Mammary epithelial cell (primary cell): ENCODE measurements at regions of chr2 and their contacts with region 1.

Region 1: DNA sequence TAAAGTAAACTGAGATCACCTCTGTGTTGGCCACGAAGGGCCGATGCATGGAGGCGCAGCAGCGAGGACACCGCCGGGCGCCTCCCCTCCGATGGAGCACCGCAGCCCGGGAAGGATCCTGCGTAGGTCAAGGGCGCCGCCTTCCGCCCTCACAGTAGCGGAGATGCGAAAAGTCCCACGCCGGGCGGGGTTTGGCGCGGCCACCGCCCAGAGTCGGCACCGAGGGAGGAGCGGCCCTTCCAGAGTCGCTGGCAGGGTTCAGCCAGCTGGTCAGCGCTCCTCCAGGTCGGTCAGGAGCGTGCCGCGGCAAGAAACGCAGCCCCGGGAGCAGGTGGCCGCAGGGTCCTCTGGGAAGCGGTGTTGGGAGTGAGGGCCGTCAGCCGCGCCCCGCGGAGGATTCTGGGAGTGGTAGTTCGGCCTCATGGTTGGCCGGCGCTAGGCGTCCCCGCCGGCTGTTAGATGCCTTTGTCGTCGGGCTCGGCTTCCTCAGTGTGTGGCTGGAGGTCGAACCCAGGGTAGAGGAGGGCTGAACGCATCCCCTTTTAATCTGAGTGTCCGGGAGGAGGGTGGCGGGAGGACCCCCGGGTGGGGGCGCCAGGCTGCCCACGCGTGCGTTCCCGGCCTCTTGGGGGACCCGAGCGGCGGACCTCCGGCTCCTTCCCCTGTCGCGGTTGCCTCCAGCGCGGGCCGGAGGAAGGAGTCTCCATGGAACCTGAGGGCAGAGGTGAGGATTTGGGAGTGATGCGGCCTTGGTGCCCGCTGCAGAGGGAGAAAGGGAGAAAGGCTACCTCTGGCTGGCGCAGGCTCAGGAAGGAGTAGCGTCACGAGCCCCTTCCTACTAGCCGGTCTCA is at the start of gene ZNF892:
- DNase-seq: peak; percentile 96
- H3K4me3 ChIP-seq: peak within 1 kb of the TSS; percentile 56 to 73 (median 64)
- H3K27ac ChIP-seq: peak within 1 kb of the TSS; percentile 63
- H3K4me1 ChIP-seq: peaks cover 13% of the 10 kb centered on the region
- H3K27me3 ChIP-seq: no peaks in the 10 kb centered on the region
- CTCF ChIP-seq: peak; percentile 9 to 59
- total RNA-seq, gene ZNF892: 4.8 to 12.0 TPM

Region 2: DNA sequence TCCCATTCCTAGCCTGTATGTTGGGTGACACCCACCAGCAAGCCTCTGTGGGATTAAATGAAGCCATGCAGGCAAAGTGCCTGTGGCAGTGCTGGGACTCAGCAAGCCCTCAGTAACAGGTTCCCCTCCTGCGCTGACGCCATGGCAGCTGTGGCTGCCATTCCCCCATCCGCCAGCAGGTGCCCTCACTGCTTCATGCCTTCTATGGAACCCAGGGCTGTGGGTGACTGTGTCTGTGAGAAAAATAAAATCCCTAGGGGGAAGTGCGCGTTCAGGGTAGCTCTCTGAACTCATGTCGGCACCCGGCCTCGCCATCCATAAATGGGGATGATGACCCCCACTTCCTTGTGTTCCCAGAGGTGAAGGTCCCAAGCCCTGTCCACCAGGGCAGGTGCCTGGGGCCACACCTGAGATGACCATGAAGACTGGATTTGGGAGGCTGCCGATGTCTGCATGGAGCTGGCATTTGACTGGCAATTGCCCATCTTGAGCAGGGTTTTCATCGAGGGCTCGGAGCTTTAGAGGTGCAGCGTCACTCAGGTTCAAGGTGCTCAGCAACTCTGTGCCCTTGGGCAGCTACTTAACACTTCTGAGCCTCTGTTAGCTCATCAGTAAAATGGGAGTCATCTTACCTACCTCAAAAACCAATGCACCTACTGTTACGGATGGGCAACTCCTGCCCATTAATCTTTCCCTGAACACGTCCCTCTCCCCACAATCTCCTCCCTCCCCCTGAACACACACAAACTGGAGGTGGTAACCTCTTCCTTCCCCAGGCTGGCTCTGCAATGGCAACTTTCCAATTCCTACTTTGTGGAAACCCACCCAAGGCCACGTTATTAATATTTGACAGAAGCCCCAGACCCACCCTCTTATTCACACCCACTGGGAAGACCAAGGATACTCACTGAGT is 184.8 kb before region 1 on chr2:
- CTCF ChIA-PET with region 1: no interaction called
- dilution Hi-C with region 1: no loop called
- in situ Hi-C with region 1: no loop called
- intact Hi-C with region 1: loop called (anchors 2 kb)
- DNase-seq: peak; percentile 53
- H3K4me3 ChIP-seq: no peak overlapping the region
- H3K27ac ChIP-seq: no peak overlapping the region
- H3K4me1 ChIP-seq: no peaks in the 10 kb centered on the region
- H3K27me3 ChIP-seq: peaks cover 14% of the 10 kb centered on the region
- CTCF ChIP-seq: peak; percentile 95 to 96

Region 3: DNA sequence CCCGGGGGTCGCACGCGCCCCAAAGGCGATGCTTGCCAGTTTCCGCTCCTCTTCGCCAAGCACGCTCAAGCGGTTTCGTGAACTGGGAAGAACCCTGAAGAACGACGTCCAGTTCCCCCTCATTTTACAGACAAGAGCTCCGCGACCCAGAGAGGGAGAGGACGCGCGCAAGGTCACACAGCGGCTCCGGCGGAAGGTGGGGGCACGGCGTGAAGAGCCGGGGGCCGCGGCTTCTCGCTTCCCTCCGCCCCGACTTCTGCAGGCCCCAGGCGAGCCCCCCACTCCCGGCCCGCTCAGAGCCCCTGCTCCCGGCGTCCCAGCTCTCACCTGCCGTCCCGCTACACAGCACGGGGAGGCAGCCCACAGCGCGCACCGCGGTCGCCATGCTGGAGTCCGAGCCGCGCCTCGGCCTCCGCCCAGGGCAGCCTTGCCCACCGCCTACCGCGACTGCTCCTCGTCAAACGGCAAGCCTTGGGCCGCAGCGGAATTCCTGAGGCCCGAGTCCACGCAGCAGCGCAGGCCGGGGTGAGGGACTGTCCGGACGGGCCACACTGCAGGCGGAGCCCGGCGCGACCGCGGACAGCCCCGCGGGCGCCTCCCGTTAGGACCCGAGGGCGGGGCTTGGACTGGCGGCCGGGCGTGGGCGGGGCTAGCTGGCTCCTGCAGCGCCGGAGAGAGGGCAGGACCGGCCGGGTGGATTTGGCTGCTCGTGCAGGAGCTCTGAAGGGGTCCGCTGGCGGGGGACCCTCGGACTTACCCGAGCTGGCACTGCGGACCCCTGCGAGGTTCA is 85.7 kb before region 1 on chr2 and contains the start of gene MRPS5:
- CTCF ChIA-PET with region 1: no interaction called
- dilution Hi-C with region 1: no loop called
- in situ Hi-C with region 1: no loop called
- intact Hi-C with region 1: loop called (anchors 5 kb)
- DNase-seq: peak; percentile 72
- H3K4me3 ChIP-seq: peak within 1 kb of the TSS; percentile 91 to 97 (median 92)
- H3K27ac ChIP-seq: peak within 1 kb of the TSS; percentile 82
- H3K4me1 ChIP-seq: peaks cover 10% of the 10 kb centered on the region
- H3K27me3 ChIP-seq: no peaks in the 10 kb centered on the region
- CTCF ChIP-seq: peak in 1 of 2 donors; percentile 32
- total RNA-seq, gene MRPS5: 21.7 to 46.8 TPM

Region 4: GRCh38 chr2:95149397-95149984 is 57.8 kb before region 1 on chr2:
- CTCF ChIA-PET with region 1: no interaction called
- dilution Hi-C with region 1: no loop called
- in situ Hi-C with region 1: no loop called
- intact Hi-C with region 1: no loop called
- DNase-seq: no peak
- H3K4me3 ChIP-seq: no peak overlapping the region
- H3K27ac ChIP-seq: no peak overlapping the region
- H3K4me1 ChIP-seq: no peaks in the 10 kb centered on the region
- H3K27me3 ChIP-seq: no peaks in the 10 kb centered on the region
- CTCF ChIP-seq: no peak

Region 5: DNA sequence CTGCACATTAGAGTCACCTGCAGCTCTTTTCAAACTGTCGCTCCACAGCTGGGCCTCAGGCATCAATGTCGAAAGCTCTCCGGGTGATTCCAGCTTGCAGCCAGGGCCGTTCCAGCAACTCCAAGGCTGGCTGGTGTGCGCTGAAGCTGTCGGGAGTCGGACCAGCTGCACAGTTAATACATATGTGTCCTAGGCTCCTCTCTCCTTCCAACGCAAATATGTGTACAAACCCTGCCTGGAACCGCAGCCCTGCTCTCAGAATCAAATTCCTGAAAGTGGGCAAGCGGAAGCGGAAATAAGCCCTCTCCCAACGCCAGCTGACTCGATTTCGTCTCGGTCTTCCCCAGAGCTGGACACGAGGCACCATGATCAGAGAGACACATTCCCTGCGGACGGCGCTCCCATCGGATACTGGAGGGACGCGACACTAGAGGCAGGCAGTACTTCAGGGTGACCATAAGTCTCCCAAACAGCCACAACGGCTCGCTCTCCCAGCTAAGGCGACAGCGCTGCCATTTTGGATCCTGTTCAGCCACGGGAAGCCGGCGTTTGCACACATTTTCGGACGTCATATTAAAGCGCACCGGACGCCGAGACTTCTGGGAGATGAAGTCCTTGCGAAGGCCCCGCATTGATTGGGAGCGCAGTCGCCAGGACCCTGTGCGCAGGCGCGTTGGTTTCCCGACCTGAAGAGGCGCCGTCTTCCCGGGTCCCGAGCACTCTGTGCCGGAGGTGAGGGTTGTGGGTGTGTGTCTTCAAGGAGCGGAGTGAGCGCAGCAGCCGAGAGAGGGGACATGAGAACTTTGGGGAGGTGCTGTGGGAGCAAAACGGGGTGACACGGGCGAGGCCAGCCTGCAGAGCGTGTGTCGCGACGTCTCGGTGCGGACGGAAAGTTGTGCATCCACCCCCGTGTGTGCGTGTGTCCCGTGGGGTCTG is 41.9 kb before region 1 on chr2 and contains the start of gene ZNF2:
- CTCF ChIA-PET with region 1: no interaction called
- dilution Hi-C with region 1: no loop called
- in situ Hi-C with region 1: no loop called
- intact Hi-C with region 1: loop called (anchors 1 kb)
- DNase-seq: peak; percentile 97
- H3K4me3 ChIP-seq: peak within 1 kb of the TSS; percentile 73 to 98 (median 88)
- H3K27ac ChIP-seq: peak within 1 kb of the TSS; percentile 82
- H3K4me1 ChIP-seq: peaks cover 8% of the 10 kb centered on the region
- H3K27me3 ChIP-seq: no peaks in the 10 kb centered on the region
- CTCF ChIP-seq: no peak
- total RNA-seq, gene ZNF2: 4.3 to 8.8 TPM

Region 6: DNA sequence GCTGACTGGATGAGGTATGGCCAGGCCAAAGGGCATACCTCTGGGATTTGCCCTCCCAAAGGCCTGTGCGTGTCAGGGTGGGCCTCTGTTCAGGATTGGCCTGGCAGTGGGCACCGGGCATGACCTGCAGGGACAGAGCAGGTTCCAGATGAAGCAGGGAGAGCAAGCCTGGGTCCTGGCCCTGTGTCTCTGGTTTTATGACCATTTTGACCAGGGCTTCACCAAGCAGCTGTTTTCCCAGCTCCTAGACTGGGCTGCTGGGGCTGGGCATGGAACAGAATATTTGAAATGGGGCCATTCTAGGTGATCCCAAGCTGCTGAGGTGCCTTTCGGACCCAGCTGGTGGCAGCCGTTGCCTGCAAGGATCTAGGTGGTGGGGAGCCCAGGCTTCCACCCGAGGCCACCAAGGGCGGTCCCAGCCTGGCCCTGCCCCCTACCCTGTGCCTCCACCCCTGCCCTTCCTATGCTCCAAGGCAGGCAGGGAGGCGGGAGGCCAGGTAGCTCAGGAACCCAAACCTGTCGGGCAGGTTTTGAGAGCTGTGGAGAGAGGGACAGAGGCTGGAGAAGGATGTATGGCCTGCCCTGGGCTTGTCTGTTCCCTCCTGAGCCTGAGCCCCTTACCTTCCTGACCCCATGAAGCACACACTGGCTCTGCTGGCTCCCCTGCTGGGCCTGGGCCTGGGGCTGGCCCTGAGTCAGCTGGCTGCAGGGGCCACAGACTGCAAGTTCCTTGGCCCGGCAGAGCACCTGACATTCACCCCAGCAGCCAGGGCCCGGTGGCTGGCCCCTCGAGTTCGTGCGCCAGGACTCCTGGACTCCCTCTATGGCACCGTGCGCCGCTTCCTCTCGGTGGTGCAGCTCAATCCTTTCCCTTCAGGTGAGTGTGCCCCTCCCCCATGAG is 66.9 kb after region 1 on chr2 and contains the start of gene PROM2:
- CTCF ChIA-PET with region 1: no interaction called
- dilution Hi-C with region 1: loop called (anchors 5 kb)
- in situ Hi-C with region 1: no loop called
- intact Hi-C with region 1: no loop called
- DNase-seq: peak; percentile 84
- H3K4me3 ChIP-seq: peak within 1 kb of the TSS; percentile 23 to 62 (median 58)
- H3K27ac ChIP-seq: peak within 1 kb of the TSS; percentile 40
- H3K4me1 ChIP-seq: peaks cover 56% of the 10 kb centered on the region
- H3K27me3 ChIP-seq: no peaks in the 10 kb centered on the region
- CTCF ChIP-seq: no peak
- total RNA-seq, gene PROM2: 27.3 to 73.5 TPM

Region 7: GRCh38 chr2:96145036-96145847 is 937.9 kb after region 1 on chr2 and contains the start of gene DUSP2:
- CTCF ChIA-PET with region 1: no interaction called
- dilution Hi-C with region 1: no loop called
- in situ Hi-C with region 1: no loop called
- intact Hi-C with region 1: no loop called
- DNase-seq: peak; percentile 58
- H3K4me3 ChIP-seq: peak within 1 kb of the TSS; percentile 37 to 65 (median 62)
- H3K27ac ChIP-seq: peak within 1 kb of the TSS; percentile 4
- H3K4me1 ChIP-seq: peaks cover 40% of the 10 kb centered on the region
- H3K27me3 ChIP-seq: no peaks in the 10 kb centered on the region
- CTCF ChIP-seq: no peak
- total RNA-seq, gene DUSP2: 2.0 to 22.0 TPM